ENCODE measurements at regions of chr2 and their contacts with region 1.

Region 1: DNA sequence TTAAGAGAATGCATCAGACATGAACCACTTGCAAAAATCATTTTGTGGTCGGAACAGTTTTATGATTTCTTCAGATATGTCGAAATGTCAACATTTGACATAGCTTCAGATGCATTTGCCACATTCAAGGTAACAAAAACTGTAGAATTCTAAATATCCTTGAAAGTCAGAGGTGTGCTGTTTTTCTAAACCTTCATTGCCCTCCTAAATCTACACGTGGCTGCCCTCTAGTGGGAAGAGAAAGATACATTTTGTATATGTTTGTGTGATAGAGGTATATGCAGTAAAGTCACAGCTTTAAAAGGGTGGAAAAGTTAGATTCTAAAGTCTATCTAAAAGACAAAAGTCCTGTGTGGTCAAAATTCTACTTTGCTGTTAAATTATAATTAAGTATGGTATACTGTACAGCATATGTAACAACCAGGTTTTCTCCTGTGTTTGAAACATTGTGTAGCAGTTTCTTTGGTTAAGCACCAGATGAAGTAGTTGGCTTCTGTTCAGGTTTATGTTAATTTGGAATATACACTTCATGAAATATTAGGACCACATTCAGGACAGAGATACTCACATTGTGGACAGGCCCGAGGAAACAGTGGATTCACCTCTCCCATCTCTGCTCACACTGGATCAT is 65.9 kb upstream of the ITM2C start:
- DNase-seq: peak; percentile 41
- H3K4me3 ChIP-seq: no peak overlapping the region
- H3K27ac ChIP-seq: no peak overlapping the region
- H3K4me1 ChIP-seq: peaks cover 7 to 22% of the 10 kb centered on the region in 2 experiments
- H3K27me3 ChIP-seq: no peaks in the 10 kb centered on the region
- CTCF ChIP-seq: peak; percentile 73
- EP300 ChIP-seq: no peak
- RAD21 ChIP-seq: peak; percentile 78

Region 2: DNA sequence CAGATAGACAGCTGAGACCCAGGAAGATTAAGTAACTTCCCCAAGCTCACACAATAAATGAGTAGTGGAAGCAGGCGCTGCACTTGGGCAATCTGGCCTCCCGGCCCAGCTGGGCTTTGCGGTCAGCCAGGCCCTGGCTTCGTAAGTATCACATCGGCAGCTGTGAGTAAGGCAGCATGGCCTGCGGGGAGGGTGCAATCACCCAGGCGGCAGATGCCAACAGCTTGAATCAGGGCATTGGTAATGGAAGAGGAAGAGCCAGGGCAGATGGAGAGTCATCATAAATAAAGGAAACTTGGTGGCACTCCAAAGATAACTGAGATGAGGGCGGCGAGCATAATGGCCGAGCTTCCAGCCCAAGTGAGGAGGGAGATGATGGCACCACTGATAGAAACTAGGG is 1309.9 kb before region 1 on chr2:
- CTCF ChIA-PET with region 1: no interaction called
- POLR2A ChIA-PET with region 1: no interaction called
- DNase-seq: peak; percentile 46
- H3K4me3 ChIP-seq: no peak overlapping the region; a peak in 1 of 4 replicates
- H3K27ac ChIP-seq: peak overlapping the region; percentile 11 to 76
- H3K4me1 ChIP-seq: peaks cover 0 to 5% of the 10 kb centered on the region in 2 experiments; a peak in 2 of 4 replicates
- H3K27me3 ChIP-seq: no peaks in the 10 kb centered on the region
- CTCF ChIP-seq: no peak
- EP300 ChIP-seq: peak in 1 of 2 experiments; percentile 93; a peak in 2 of 4 replicates
- RAD21 ChIP-seq: no peak

Region 3: DNA sequence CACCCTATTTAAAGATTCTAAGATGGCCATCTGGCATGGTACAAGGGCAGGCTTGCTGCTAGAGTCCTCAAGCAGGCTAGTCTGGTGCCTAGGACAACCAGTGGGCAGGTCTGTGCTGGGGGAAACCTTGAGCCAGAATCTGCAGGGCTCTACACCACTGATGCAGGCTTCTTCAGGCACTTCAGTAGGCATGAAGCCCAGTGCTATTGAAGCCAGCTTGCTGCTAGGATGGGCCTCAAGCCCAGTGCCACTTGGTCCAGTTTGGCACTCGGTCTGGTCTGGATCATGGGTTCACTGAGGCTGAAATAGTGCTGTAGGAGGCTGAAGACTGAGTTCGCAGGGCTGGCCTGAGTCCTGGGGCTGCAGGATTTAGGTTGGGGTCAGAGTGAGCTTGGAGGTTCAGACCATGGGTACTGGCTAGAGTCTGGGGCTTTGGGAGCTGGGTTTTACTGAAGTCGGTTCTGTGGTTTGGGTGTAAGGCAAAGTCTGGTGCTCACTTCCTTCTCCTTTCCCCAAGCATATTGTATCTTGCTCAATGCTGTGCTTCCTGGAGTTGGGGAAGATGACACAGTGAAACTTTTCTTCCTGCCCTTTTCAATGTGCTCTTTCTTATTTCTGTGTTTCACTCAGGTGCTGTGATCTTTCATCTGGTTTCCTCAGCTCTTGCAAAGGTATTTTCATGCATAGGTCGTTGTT is 341.7 kb before region 1 on chr2:
- CTCF ChIA-PET with region 1: no interaction called
- POLR2A ChIA-PET with region 1: no interaction called
- DNase-seq: no peak
- H3K4me3 ChIP-seq: no peak overlapping the region
- H3K27ac ChIP-seq: no peak overlapping the region
- H3K4me1 ChIP-seq: no peaks in the 10 kb centered on the region
- H3K27me3 ChIP-seq: no peaks in the 10 kb centered on the region
- CTCF ChIP-seq: no peak
- EP300 ChIP-seq: no peak
- RAD21 ChIP-seq: no peak

Region 4: DNA sequence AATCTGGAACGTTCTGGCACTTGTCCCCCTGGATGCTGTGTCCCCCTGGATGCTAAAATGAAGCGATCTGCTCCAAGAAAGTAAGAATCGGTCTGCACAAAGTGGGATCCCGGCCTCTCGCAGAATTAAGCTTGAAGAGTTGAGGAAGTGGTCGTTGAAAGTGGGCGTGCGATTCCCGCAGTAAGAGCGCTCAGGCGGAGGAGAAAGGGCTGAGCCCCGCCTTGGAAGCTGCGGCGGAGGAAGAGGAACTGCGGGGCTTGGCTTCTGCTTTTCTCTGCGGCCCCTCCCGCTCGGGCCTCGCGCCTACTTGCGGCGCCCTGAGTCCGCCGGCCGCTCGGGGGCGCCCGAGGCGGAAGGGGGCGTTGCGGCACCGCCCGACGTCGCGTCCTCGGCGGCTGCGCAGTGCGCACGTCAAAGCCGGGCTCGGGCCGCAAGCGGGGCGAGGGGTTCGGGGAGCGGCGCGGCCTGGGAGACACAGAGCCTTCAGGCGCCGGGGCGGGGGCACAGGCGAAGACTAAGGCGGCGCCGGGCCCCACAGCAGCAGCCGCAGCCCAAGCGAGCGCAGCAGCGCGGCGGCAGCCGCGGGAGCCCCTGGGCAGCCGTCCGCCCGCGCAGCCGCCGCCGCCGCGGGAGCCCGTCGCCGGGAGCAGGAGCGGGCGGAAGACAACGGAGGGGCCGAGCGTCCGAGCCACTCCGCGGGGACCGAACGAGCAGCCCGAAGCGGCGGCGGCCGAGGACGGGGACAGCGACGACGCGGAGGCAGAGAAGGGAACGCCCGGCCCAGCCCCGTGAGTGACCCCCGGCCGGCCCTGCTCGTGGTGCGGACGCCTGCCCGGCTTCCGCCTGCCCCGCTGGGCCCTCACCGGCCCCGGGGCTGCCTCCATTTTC is 86.2 kb before region 1 on chr2 and contains the start of gene CAB39:
- CTCF ChIA-PET with region 1: interaction called, 26 read pairs
- POLR2A ChIA-PET with region 1: no interaction called
- DNase-seq: peak; percentile 97
- H3K4me3 ChIP-seq: peak within 1 kb of the TSS; percentile 76 to 86
- H3K27ac ChIP-seq: peak within 1 kb of the TSS; percentile 82 to 90
- H3K4me1 ChIP-seq: peaks cover 0 to 2% of the 10 kb centered on the region in 2 experiments; a peak in 2 of 4 replicates
- H3K27me3 ChIP-seq: no peaks in the 10 kb centered on the region
- CTCF ChIP-seq: peak; percentile 73
- EP300 ChIP-seq: no peak
- RAD21 ChIP-seq: peak; percentile 37
- polyA plus RNA-seq, gene CAB39: 15.7 and 18.7 TPM in 2 replicates

Region 5: DNA sequence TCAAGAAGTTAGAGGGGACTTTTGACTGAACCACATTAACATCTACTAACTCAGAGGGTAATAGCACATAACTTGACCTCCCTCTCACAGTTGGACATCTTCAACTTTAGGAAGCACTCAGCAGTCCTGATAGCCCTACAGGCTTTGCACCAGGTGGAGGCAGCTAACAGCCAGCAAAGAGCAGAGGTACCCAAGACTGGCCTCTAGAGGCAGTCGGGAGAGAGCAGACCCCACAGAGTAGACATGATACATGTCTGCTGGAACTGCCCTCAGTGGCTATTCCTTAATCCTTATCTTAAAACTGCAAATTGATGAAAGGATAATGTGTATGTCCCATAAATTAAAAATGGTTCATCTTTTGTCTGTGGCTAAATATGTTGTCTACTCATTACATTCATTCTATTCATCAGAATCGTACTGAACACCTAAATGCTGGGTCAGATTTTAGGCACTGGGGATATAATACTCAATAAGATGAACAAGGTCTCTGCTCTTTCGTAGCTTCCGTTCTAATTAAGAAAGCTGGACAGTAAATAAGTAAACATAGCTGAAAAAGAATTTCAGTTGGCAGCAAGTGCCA is 36.5 kb before region 1 on chr2:
- CTCF ChIA-PET with region 1: interaction called, 14 read pairs
- POLR2A ChIA-PET with region 1: no interaction called
- DNase-seq: peak; percentile 50
- H3K4me3 ChIP-seq: no peak overlapping the region
- H3K27ac ChIP-seq: no peak overlapping the region
- H3K4me1 ChIP-seq: no peaks in the 10 kb centered on the region; a peak in 1 of 4 replicates
- H3K27me3 ChIP-seq: no peaks in the 10 kb centered on the region
- CTCF ChIP-seq: peak; percentile 52
- EP300 ChIP-seq: no peak
- RAD21 ChIP-seq: peak; percentile 36

Region 6: GRCh38 chr2:230814616-230815015 is 15.7 kb after region 1 on chr2:
- CTCF ChIA-PET with region 1: interaction called, 41 read pairs
- POLR2A ChIA-PET with region 1: no interaction called
- DNase-seq: no peak
- H3K4me3 ChIP-seq: no peak overlapping the region
- H3K27ac ChIP-seq: no peak overlapping the region
- H3K4me1 ChIP-seq: no peaks in the 10 kb centered on the region
- H3K27me3 ChIP-seq: no peaks in the 10 kb centered on the region
- CTCF ChIP-seq: peak; percentile 59
- EP300 ChIP-seq: no peak
- RAD21 ChIP-seq: peak; percentile 43

Region 7: GRCh38 chr2:230942920-230943896 is 144.3 kb after region 1 on chr2:
- CTCF ChIA-PET with region 1: no interaction called
- POLR2A ChIA-PET with region 1: no interaction called
- DNase-seq: no peak
- H3K4me3 ChIP-seq: no peak overlapping the region
- H3K27ac ChIP-seq: no peak overlapping the region
- H3K4me1 ChIP-seq: no peaks in the 10 kb centered on the region
- H3K27me3 ChIP-seq: no peaks in the 10 kb centered on the region; the same call in 1 of the 2 replicates
- CTCF ChIP-seq: no peak
- EP300 ChIP-seq: no peak
- RAD21 ChIP-seq: no peak